Calu3 (cell line): ENCODE measurements at regions of chr1 and their contacts with region 1.

Region 1: GRCh38 chr1:47437447-47438164 is at the start of gene FOXD2:
- DNase-seq: peak; percentile 97
- H3K4me3 Mint-ChIP-seq: peak within 1 kb of the TSS; percentile 87
- H3K27ac Mint-ChIP-seq: peak within 1 kb of the TSS; percentile 48
- H3K4me1 Mint-ChIP-seq: peaks cover 15% of the 10 kb centered on the region
- H3K27me3 Mint-ChIP-seq: no peaks in the 10 kb centered on the region
- CTCF ChIP-seq: peak; percentile 99
- total RNA-seq, gene FOXD2: 0.68 and 0.78 TPM in 2 replicates

Region 2: GRCh38 chr1:46969014-46969619 is 468.5 kb before region 1 on chr1:
- CTCF ChIA-PET with region 1: no interaction called
- intact Hi-C with region 1: no loop called
- DNase-seq: no peak
- H3K4me3 Mint-ChIP-seq: no peak overlapping the region
- H3K27ac Mint-ChIP-seq: no peak overlapping the region
- H3K4me1 Mint-ChIP-seq: no peaks in the 10 kb centered on the region
- H3K27me3 Mint-ChIP-seq: peaks cover 60% of the 10 kb centered on the region
- CTCF ChIP-seq: no peak

Region 3: DNA sequence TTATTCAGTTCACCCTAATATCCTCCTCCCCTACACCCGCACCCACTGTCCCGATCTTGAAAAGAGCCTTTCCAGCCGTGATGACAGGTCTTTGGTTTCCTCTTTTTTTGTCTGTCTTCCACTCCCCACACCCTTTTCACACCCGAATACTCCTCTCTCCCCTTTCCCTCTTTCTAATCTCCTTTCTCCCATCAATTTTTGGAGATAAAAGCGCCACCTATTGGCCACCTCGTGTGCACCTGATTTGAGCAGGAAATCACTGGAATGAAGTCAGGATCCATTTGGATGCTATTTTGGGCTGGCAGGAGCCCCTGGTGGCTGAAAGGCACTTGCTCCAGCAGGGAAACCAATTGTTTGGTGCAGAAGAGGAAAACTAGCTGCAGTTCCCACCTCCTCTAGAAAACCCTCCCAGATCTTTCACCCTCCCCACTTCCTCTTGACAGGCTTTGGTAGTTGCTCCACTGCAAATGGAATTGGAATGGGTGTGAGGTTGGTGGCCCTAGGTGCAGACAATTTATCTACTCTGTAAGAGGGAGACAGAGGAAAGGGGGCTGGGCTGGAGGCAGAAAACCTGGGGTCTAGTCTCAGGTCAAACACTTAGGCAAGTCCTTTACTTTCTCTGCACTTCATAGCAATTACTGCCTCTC is 13.1 kb before region 1 on chr1:
- CTCF ChIA-PET with region 1: interaction called, 11 read pairs
- intact Hi-C with region 1: no loop called
- DNase-seq: peak; percentile 56
- H3K4me3 Mint-ChIP-seq: no peak overlapping the region
- H3K27ac Mint-ChIP-seq: no peak overlapping the region
- H3K4me1 Mint-ChIP-seq: peaks cover 17% of the 10 kb centered on the region
- H3K27me3 Mint-ChIP-seq: no peaks in the 10 kb centered on the region
- CTCF ChIP-seq: peak; percentile 77

Region 4: GRCh38 chr1:47527658-47528255 is 90.2 kb after region 1 on chr1:
- CTCF ChIA-PET with region 1: interaction called, 5 read pairs
- intact Hi-C with region 1: loop called (anchors 5 kb)
- DNase-seq: peak; percentile 79
- H3K4me3 Mint-ChIP-seq: no peak overlapping the region
- H3K27ac Mint-ChIP-seq: no peak overlapping the region
- H3K4me1 Mint-ChIP-seq: peaks cover 15% of the 10 kb centered on the region
- H3K27me3 Mint-ChIP-seq: peaks cover 33% of the 10 kb centered on the region
- CTCF ChIP-seq: peak; percentile 80

Region 5: GRCh38 chr1:47703981-47704596 is 266.5 kb after region 1 on chr1:
- CTCF ChIA-PET with region 1: interaction called, 21 read pairs
- intact Hi-C with region 1: no loop called
- DNase-seq: no peak
- H3K4me3 Mint-ChIP-seq: no peak overlapping the region
- H3K27ac Mint-ChIP-seq: no peak overlapping the region
- H3K4me1 Mint-ChIP-seq: no peaks in the 10 kb centered on the region
- H3K27me3 Mint-ChIP-seq: peaks cover 16% of the 10 kb centered on the region
- CTCF ChIP-seq: no peak

Region 6: GRCh38 chr1:47725992-47726855 is 288.6 kb after region 1 on chr1:
- CTCF ChIA-PET with region 1: interaction called, 85 read pairs
- intact Hi-C with region 1: loop called (anchors 2 kb)
- DNase-seq: peak; percentile 85
- H3K4me3 Mint-ChIP-seq: peak overlapping the region; percentile 55
- H3K27ac Mint-ChIP-seq: no peak overlapping the region
- H3K4me1 Mint-ChIP-seq: peaks cover 26% of the 10 kb centered on the region
- H3K27me3 Mint-ChIP-seq: peaks cover 42% of the 10 kb centered on the region
- CTCF ChIP-seq: peak; percentile 72